Activated CD4-positive, alpha-beta T cell treated with anti-CD3 and anti-CD28 coated beads, Interleukin-2, amount 10 ng/mL, durations not matched to agents 24 days and 14 days (primary cell): ENCODE measurements at regions of chr1 and their contacts with region 1.

Region 1: GRCh38 chr1:19074902-19075721 is 118.6 kb upstream of the IFFO2 start:
- DNase-seq: no peak
- H3K4me3 Mint-ChIP-seq: peak overlapping the region; percentile 59
- H3K27ac Mint-ChIP-seq: peak overlapping the region; percentile 72
- H3K4me1 Mint-ChIP-seq: peaks cover 30% of the 10 kb centered on the region
- H3K27me3 Mint-ChIP-seq: no peaks in the 10 kb centered on the region

Region 2: GRCh38 chr1:18949686-18950400 is 125.3 kb before region 1 on chr1:
- intact Hi-C with region 1: loop called (anchors 2 kb)
- DNase-seq: peak; percentile 76
- H3K4me3 Mint-ChIP-seq: peak overlapping the region; percentile 78
- H3K27ac Mint-ChIP-seq: peak overlapping the region; percentile 98
- H3K4me1 Mint-ChIP-seq: peaks cover 90% of the 10 kb centered on the region
- H3K27me3 Mint-ChIP-seq: no peaks in the 10 kb centered on the region